H1 (cell line): ENCODE measurements at regions of chr4 and their contacts with region 1.

Region 1: DNA sequence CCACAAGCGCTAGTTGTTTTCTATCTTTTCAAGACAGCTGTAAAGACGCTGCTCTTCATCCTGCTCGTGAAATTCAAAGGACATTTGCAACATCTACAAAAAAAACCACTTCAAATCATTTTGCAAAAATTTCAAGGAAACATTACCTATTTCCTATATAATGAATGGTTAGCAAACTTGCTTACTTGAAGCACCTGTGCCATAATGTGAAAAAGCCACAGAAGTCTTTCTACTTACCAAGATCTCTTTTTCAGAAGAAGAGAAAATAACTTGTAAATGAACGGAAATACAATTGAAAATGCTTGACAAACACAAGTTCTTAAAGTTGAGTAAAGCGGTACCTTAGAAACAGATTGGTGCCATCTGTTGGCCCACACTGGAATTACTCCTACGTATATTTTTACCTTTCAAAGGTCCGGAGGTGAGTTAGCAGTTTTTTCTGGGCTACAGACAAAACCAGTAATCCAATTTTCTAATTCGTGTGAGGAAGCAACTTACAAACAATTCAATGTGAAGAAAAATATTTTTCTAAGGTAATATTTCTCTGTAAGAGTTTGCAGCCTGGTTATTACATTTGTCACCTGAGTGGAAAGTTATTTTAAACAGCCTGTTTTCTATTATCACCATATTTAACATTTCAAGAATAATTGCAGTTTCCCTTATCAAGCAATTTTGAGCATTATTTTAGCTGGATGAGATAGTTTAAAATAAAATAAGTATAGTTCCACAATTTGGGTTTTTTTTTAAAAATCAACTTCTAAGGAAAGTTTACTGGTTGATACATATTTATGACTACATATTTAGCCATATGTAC is at the start of gene TLR6:
- DNase-seq: peak in 1 of 2 experiments; percentile 63
- H3K4me3 ChIP-seq: no peak within 1 kb of the TSS
- H3K27ac ChIP-seq: no peak within 1 kb of the TSS
- H3K4me1 ChIP-seq: peaks cover 0 to 3% (median 1%) of the 10 kb centered on the region in 4 experiments; a peak in 1 of 7 replicates
- H3K27me3 ChIP-seq: no peaks in the 10 kb centered on the region
- CTCF ChIP-seq: peak in 2 of 3 experiments; percentile 48 to 69; a peak in 2 of 4 replicates
- EP300 ChIP-seq: no peak
- POLR2A ChIP-seq: no peak
- RAD21 ChIP-seq: peak; percentile 48 to 56
- total RNA-seq, gene TLR6: 0.08 and 0.09 TPM in 2 replicates

Region 2: DNA sequence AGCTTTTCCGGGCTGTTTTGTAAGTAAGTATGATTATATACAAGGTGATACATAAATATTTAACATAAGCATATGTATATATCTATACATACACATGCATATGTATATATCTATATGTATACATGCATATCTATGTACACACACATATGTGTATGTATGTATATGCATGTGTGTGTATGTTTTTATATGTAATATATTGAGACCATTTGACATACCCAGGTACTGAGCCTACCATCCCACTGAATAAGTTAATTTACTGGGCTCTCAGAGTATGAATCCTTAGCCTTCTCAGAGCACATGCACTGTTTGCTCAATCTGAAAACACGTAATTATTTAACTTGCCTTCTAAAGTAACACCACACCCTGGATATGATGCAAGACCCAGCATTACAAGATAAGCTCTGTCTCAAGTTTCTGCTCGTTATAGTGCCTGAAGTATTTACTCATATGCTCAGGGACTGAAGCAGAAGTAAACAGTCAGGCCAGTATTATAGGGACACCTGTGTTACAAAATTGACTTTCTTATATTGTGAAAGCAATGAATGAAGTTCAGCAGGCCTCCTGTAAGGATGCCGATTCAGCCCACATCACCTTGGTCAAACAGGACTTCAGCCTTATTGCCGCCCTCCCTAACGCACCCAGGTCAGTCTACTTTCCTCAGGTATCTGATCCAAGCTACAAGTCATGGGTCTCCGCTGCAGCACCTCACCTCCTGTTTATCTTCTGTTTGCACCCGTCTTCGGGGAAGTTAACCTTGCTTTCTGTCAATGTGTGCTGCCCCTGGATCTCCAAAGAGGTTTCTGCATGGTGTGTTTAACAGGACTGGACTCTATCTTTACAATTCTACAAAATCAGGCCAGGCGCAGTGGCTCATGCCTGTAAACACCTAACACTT is 235.7 kb before region 1 on chr4:
- CTCF ChIA-PET with region 1: no interaction called
- POLR2A ChIA-PET with region 1: no interaction called
- DNase-seq: peak in 1 of 2 experiments; percentile 20
- H3K4me3 ChIP-seq: no peak overlapping the region
- H3K27ac ChIP-seq: no peak overlapping the region
- H3K4me1 ChIP-seq: no peaks in the 10 kb centered on the region
- H3K27me3 ChIP-seq: no peaks in the 10 kb centered on the region
- CTCF ChIP-seq: no peak
- EP300 ChIP-seq: no peak
- POLR2A ChIP-seq: no peak
- RAD21 ChIP-seq: no peak

Region 3: GRCh38 chr4:38759113-38759789 is 97.5 kb before region 1 on chr4:
- CTCF ChIA-PET with region 1: interaction called, 66 read pairs
- POLR2A ChIA-PET with region 1: interaction called, 5 read pairs
- DNase-seq: peak; percentile 15 to 79
- H3K4me3 ChIP-seq: no peak overlapping the region
- H3K27ac ChIP-seq: no peak overlapping the region
- H3K4me1 ChIP-seq: no peaks in the 10 kb centered on the region
- H3K27me3 ChIP-seq: no peaks in the 10 kb centered on the region
- CTCF ChIP-seq: peak; percentile 49 to 74 (median 70)
- EP300 ChIP-seq: no peak
- POLR2A ChIP-seq: no peak
- RAD21 ChIP-seq: peak; percentile 84 to 87

Region 4: GRCh38 chr4:38782452-38783108 is 74.2 kb before region 1 on chr4 and contains the start of gene TLR10:
- CTCF ChIA-PET with region 1: interaction called, 13 read pairs
- POLR2A ChIA-PET with region 1: no interaction called
- DNase-seq: no peak
- H3K4me3 ChIP-seq: no peak within 1 kb of the TSS
- H3K27ac ChIP-seq: no peak within 1 kb of the TSS
- H3K4me1 ChIP-seq: no peaks in the 10 kb centered on the region
- H3K27me3 ChIP-seq: no peaks in the 10 kb centered on the region
- CTCF ChIP-seq: peak; percentile 3 to 56 (median 49); a peak in 3 of 4 replicates
- EP300 ChIP-seq: no peak
- POLR2A ChIP-seq: no peak
- RAD21 ChIP-seq: peak; percentile 54 to 59
- total RNA-seq, gene TLR10: not detected in 2 replicates

Region 5: GRCh38 chr4:38842994-38843393 is 13.7 kb before region 1 on chr4:
- CTCF ChIA-PET with region 1: interaction called, 13 read pairs
- POLR2A ChIA-PET with region 1: interaction called, 3 read pairs
- DNase-seq: no peak
- H3K4me3 ChIP-seq: no peak overlapping the region
- H3K27ac ChIP-seq: no peak overlapping the region
- H3K4me1 ChIP-seq: peaks cover 0 to 3% (median 0%) of the 10 kb centered on the region in 4 experiments; a peak in 1 of 7 replicates
- H3K27me3 ChIP-seq: no peaks in the 10 kb centered on the region
- CTCF ChIP-seq: no peak
- EP300 ChIP-seq: no peak
- POLR2A ChIP-seq: no peak
- RAD21 ChIP-seq: no peak

Region 6: DNA sequence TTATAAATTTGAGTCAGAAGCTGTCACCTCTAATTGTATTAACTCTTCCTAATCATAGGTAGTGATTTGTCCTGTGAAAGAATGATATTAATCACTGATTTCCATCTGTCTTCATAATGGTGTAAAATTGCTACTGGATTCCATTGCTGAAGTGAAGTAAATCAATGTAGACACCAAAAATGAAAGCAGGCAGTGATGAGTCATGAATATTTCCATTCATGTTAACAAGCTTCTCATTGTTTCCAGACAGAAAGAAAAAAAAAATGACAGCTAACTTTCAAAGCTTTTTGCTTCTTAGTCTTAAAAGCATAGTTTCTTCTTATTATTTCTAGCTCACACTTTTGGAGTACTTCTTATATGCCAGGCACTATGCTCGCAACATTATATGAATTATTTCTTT is 32.4 kb after region 1 on chr4:
- CTCF ChIA-PET with region 1: interaction called, 15 read pairs
- POLR2A ChIA-PET with region 1: interaction called, 4 read pairs
- DNase-seq: no peak
- H3K4me3 ChIP-seq: no peak overlapping the region
- H3K27ac ChIP-seq: no peak overlapping the region
- H3K4me1 ChIP-seq: no peaks in the 10 kb centered on the region; a peak in 1 of 7 replicates
- H3K27me3 ChIP-seq: no peaks in the 10 kb centered on the region
- CTCF ChIP-seq: no peak
- EP300 ChIP-seq: no peak
- POLR2A ChIP-seq: no peak
- RAD21 ChIP-seq: no peak

Region 7: DNA sequence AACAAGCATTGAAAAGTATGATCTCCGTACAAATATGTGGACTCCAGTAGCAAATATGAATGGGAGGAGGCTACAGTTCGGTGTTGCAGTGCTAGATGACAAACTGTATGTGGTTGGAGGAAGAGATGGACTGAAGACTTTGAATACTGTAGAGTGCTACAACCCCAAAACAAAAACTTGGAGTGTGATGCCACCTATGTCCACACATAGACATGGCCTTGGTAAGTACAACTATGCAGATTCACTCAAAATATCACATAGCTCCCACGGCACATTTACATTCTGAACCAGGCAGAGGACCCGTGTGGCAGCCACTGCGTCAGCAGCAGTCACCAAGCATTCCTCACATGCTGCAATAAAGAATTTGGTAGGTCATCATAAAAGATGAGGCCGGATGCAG is 246.6 kb after region 1 on chr4:
- CTCF ChIA-PET with region 1: no interaction called
- POLR2A ChIA-PET with region 1: no interaction called
- DNase-seq: no peak
- H3K4me3 ChIP-seq: no peak overlapping the region
- H3K27ac ChIP-seq: no peak overlapping the region
- H3K4me1 ChIP-seq: no peaks in the 10 kb centered on the region; a peak in 1 of 7 replicates
- H3K27me3 ChIP-seq: no peaks in the 10 kb centered on the region
- CTCF ChIP-seq: no peak
- EP300 ChIP-seq: no peak
- POLR2A ChIP-seq: no peak
- RAD21 ChIP-seq: no peak